Sigmoid colon (tissue), 7 donors: ENCODE measurements at regions of chr19 and their contacts with region 1.

Region 1: GRCh38 chr19:3572132-3572854 is 451 bp upstream of the HMG20B start:
- DNase-seq: peak; percentile 100
- H3K4me3 ChIP-seq: peak overlapping the region; percentile 37 to 98 (median 82)
- H3K27ac ChIP-seq: peak overlapping the region; percentile 59 to 91 (median 90)
- H3K4me1 ChIP-seq: peaks cover 0 to 44% (median 37%) of the 10 kb centered on the region in 4 donors
- H3K27me3 ChIP-seq: no peaks in the 10 kb centered on the region
- CTCF ChIP-seq: no peak
- EP300 ChIP-seq: no peak
- POLR2A ChIP-seq: no peak

Region 2: GRCh38 chr19:3505598-3506383 is 66.5 kb before region 1 on chr19 and contains the start of gene FZR1:
- intact Hi-C with region 1: loop called (anchors 2 kb)
- DNase-seq: peak; percentile 100
- H3K4me3 ChIP-seq: peak within 1 kb of the TSS; percentile 75 to 92 (median 89)
- H3K27ac ChIP-seq: peak within 1 kb of the TSS; percentile 81 to 92 (median 86)
- H3K4me1 ChIP-seq: peaks cover 0 to 46% (median 33%) of the 10 kb centered on the region in 4 donors
- H3K27me3 ChIP-seq: no peaks in the 10 kb centered on the region
- CTCF ChIP-seq: no peak
- EP300 ChIP-seq: peak in 1 of 4 donors; percentile 47
- POLR2A ChIP-seq: peak in 1 of 2 donors; percentile 28
- total RNA-seq, gene FZR1: 11.8 to 44.6 (median 20.5) TPM

Region 3: GRCh38 chr19:3557461-3558248 is 14.6 kb before region 1 on chr19 and contains the start of gene MFSD12:
- intact Hi-C with region 1: loop called (anchors 1 kb)
- DNase-seq: peak; percentile 97
- H3K4me3 ChIP-seq: peak within 1 kb of the TSS; percentile 66 to 99 (median 93)
- H3K27ac ChIP-seq: peak within 1 kb of the TSS; percentile 83 to 91 (median 87)
- H3K4me1 ChIP-seq: peaks cover 0 to 33% (median 27%) of the 10 kb centered on the region in 4 donors
- H3K27me3 ChIP-seq: no peaks in the 10 kb centered on the region
- CTCF ChIP-seq: no peak
- EP300 ChIP-seq: peak in 1 of 4 donors; percentile 37
- POLR2A ChIP-seq: no peak
- total RNA-seq, gene MFSD12: 13.7 to 36.0 (median 22.6) TPM